Activated naive CD8-positive, alpha-beta T cell treated with anti-CD3 and anti-CD28 coated beads, Interleukin-2, amount 10 ng/mL, durations not matched to agents 7 days and 5 days (primary cell): ENCODE measurements at regions of chr11 and their contacts with region 1.

Region 1: GRCh38 chr11:60841797-60842667 is at the start of gene CCDC86:
- DNase-seq: peak; percentile 99
- ATAC-seq: peak; percentile 93
- H3K4me3 Mint-ChIP-seq: peak within 1 kb of the TSS; percentile 89
- H3K27ac Mint-ChIP-seq: peak within 1 kb of the TSS; percentile 94
- H3K4me1 Mint-ChIP-seq: peaks cover 38% of the 10 kb centered on the region
- H3K27me3 Mint-ChIP-seq: no peaks in the 10 kb centered on the region
- total RNA-seq, gene CCDC86: 16.9 to 17.1 TPM

Region 2: GRCh38 chr11:60821827-60822599 is 20.0 kb before region 1 on chr11:
- POLR2A ChIA-PET with region 1: no interaction called
- DNase-seq: no peak
- ATAC-seq: no peak
- H3K4me3 Mint-ChIP-seq: no peak overlapping the region
- H3K27ac Mint-ChIP-seq: no peak overlapping the region
- H3K4me1 Mint-ChIP-seq: peaks cover 2% of the 10 kb centered on the region
- H3K27me3 Mint-ChIP-seq: peaks cover 4% of the 10 kb centered on the region

Region 3: DNA sequence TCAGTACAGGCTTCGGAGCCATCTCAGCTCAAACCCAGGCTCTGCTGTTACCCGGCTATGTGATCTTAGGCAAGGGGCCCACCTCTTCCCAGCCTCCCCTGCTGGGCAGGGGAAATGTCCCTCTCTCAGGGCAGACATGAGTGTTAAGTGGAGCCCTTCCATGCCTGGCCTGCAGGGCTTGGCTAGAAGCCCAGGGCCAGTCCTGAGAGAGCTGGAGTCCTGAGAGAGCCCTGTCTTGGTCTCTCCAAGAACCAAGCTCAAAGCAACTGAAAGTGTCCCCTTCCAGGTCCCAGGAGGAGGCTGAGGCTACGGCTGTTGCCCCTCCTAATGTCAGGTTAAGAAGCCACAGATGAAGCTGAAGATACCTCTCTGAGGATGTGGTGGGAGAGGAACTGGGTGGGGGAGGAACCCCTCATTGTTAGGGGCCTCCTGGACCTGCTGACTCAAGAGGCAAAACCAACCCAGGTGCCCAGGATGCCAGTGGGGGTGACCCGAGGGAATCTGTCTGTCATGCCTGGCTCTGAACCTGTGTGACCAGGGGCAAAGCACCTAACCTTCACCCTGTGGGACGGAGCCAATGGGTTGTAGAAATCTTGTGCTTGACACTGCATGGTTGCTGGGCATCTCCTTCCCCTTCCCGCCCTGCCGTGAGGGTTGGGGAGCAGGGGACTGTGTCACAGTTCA is 29.5 kb after region 1 on chr11:
- POLR2A ChIA-PET with region 1: interaction called, 13 read pairs
- DNase-seq: peak; percentile 59
- ATAC-seq: peak; percentile 62
- H3K4me3 Mint-ChIP-seq: peak overlapping the region; percentile 59
- H3K27ac Mint-ChIP-seq: peak overlapping the region; percentile 85
- H3K4me1 Mint-ChIP-seq: peaks cover 56% of the 10 kb centered on the region
- H3K27me3 Mint-ChIP-seq: no peaks in the 10 kb centered on the region

Region 4: GRCh38 chr11:60906132-60906972 is 64.3 kb after region 1 on chr11 and contains the start of gene PRPF19:
- POLR2A ChIA-PET with region 1: no interaction called
- DNase-seq: peak; percentile 98
- ATAC-seq: peak; percentile 93
- H3K4me3 Mint-ChIP-seq: peak within 1 kb of the TSS; percentile 81
- H3K27ac Mint-ChIP-seq: peak within 1 kb of the TSS; percentile 91
- H3K4me1 Mint-ChIP-seq: peaks cover 38% of the 10 kb centered on the region
- H3K27me3 Mint-ChIP-seq: no peaks in the 10 kb centered on the region
- total RNA-seq, gene PRPF19: 97.7 to 103 TPM

Region 5: GRCh38 chr11:60925868-60926267 is 83.8 kb after region 1 on chr11:
- POLR2A ChIA-PET with region 1: no interaction called
- DNase-seq: no peak
- ATAC-seq: no peak
- H3K4me3 Mint-ChIP-seq: no peak overlapping the region
- H3K27ac Mint-ChIP-seq: no peak overlapping the region
- H3K4me1 Mint-ChIP-seq: peaks cover 6% of the 10 kb centered on the region
- H3K27me3 Mint-ChIP-seq: peaks cover 24% of the 10 kb centered on the region

Region 6: DNA sequence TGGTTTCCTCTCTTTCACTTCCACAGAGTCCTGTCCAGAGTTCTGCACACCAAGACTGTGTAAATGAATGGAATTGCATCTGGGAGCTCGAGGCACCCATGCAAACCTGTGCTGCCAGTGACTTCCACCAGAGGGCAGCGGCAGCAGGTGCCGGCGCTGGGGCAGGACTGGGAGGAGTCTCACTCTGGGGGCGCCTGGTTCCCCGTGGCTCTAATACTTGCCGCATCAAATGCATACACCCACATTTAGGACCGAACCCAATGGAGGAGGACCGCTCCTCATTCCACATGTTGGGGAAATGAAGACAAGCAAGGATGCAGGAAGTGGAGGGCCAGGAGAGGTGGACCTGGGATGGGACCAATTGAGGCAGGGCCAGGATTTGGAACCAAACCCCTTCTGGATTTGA is 128.3 kb after region 1 on chr11:
- POLR2A ChIA-PET with region 1: no interaction called
- DNase-seq: peak; percentile 85
- ATAC-seq: peak; percentile 43
- H3K4me3 Mint-ChIP-seq: peak overlapping the region; percentile 26
- H3K27ac Mint-ChIP-seq: peak overlapping the region; percentile 30
- H3K4me1 Mint-ChIP-seq: peaks cover 29% of the 10 kb centered on the region
- H3K27me3 Mint-ChIP-seq: peaks cover 3% of the 10 kb centered on the region